ENCODE measurements at regions of chr12 and their contacts with region 1.

Region 1: GRCh38 chr12:108950991-108951739 is 69.7 kb downstream of the SVOP start:
- DNase-seq: peak; percentile 38 to 76 (median 72)
- H3K4me3 ChIP-seq: no peak overlapping the region
- H3K27ac ChIP-seq: no peak overlapping the region
- H3K4me1 ChIP-seq: no peaks in the 10 kb centered on the region
- H3K27me3 ChIP-seq: no peaks in the 10 kb centered on the region
- CTCF ChIP-seq: peak; percentile 62 to 88 (median 66)
- EP300 ChIP-seq: no peak
- POLR2A ChIP-seq: no peak

Region 2: DNA sequence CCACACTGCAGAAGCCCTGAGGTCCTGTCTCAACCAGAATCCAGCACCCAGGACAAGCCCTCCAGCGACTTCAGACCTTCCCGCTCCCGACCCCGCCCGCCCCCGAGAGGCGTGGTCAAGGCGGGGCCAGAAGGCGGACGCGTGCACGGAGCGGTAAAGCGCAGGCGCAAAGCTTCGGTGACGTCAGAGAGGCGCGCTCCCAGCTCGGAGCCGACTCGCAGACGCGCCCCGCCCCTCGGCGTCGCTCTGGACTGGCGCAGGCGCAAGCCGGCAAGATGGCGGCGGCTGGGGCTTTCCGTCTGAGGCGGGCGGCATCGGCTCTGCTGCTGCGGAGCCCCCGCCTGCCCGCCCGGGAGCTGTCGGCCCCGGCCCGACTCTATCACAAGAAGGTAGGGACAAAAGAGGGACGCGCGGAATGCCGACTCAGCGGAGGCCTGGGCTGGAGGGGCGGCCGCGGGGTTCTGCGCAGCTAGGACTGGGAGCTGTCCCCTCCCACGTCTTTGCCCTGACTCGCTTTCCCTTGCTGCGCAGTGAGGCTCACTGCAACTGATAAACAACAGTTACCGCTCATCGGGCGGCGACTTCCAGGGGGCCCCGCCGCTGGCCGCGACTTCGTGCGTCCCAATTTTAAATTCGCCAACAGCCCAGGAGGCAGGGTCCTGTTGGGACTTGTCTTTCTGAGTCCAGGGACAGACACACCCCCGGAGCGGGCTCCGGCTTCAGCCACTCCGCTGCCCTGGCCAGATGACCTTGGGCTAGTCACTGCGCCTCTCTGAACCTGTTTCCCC is 388.6 kb before region 1 on chr12 and contains the start of gene ISCU:
- intact Hi-C with region 1: loop called in 1 of 4 experiments (anchors 10 kb)
- DNase-seq: peak; percentile 98 to 100 (median 99)
- H3K4me3 ChIP-seq: peak within 1 kb of the TSS; percentile 96
- H3K27ac ChIP-seq: peak within 1 kb of the TSS; percentile 78 to 88
- H3K4me1 ChIP-seq: peaks cover 12% of the 10 kb centered on the region
- H3K27me3 ChIP-seq: no peaks in the 10 kb centered on the region
- CTCF ChIP-seq: no peak
- EP300 ChIP-seq: no peak
- POLR2A ChIP-seq: peak; percentile 92
- total RNA-seq, gene ISCU: 110 to 238 (median 156) TPM

Region 3: DNA sequence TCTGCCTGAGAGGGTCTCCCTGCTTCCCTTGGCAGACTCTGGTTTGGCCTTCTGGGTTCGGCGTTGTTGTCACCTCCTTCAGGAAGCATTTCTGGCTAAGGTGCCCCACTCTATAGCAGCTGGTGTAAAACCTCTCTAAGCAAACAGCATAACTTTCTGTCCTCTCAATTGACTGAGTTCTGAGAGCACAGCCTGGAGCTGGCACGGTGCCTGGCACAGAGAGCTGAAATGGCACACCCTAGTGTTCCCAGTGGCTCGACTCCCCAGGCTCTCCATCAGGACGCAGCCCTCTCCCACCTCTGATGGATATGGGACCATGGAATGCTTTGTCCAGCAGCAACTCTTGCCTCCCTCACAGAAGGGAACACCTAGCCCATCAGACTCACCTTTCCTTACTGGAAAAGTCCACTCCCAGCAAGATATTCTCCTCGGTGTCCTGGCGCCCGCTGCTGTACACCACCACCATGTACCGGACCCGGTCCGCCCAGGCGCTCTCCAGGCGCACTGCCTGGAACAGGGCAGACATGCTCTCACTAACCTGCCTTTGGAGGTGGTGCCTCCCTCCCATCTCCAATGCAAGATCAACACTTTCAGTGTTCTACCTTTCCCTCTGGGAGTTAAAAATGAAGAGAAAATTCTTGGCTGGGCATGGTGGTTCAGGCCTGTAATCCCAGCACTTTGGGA is 134.4 kb before region 1 on chr12:
- intact Hi-C with region 1: loop called in 1 of 4 experiments (anchors 10 kb)
- DNase-seq: no peak
- H3K4me3 ChIP-seq: no peak overlapping the region
- H3K27ac ChIP-seq: no peak overlapping the region
- H3K4me1 ChIP-seq: peaks cover 2% of the 10 kb centered on the region
- H3K27me3 ChIP-seq: no peaks in the 10 kb centered on the region
- CTCF ChIP-seq: no peak
- EP300 ChIP-seq: no peak
- POLR2A ChIP-seq: no peak

Region 4: GRCh38 chr12:108861878-108862587 is 89.1 kb before region 1 on chr12:
- intact Hi-C with region 1: loop called in 1 of 4 experiments (anchors 5 kb)
- DNase-seq: no peak
- H3K4me3 ChIP-seq: no peak overlapping the region
- H3K27ac ChIP-seq: no peak overlapping the region
- H3K4me1 ChIP-seq: no peaks in the 10 kb centered on the region
- H3K27me3 ChIP-seq: no peaks in the 10 kb centered on the region
- CTCF ChIP-seq: no peak
- EP300 ChIP-seq: no peak
- POLR2A ChIP-seq: no peak

Region 5: GRCh38 chr12:108972358-108972757 is 21.2 kb after region 1 on chr12:
- intact Hi-C with region 1: no loop called
- DNase-seq: no peak
- H3K4me3 ChIP-seq: no peak overlapping the region
- H3K27ac ChIP-seq: no peak overlapping the region
- H3K4me1 ChIP-seq: no peaks in the 10 kb centered on the region
- H3K27me3 ChIP-seq: no peaks in the 10 kb centered on the region
- CTCF ChIP-seq: no peak
- EP300 ChIP-seq: no peak
- POLR2A ChIP-seq: no peak

Measured in ovary (tissue), 10 donors.